BJ (cell line): ENCODE measurements at regions of chr21 and their contacts with region 1.

Region 1: GRCh38 chr21:44338971-44339910 is at the start of gene CFAP410:
- DNase-seq: peak; percentile 67
- H3K4me3 ChIP-seq: peak within 1 kb of the TSS; percentile 100
- H3K27me3 ChIP-seq: no peaks in the 10 kb centered on the region
- CTCF ChIP-seq: no peak
- polyA plus RNA-seq, gene CFAP410: 8.4 and 13.5 TPM in 2 replicates

Region 2: DNA sequence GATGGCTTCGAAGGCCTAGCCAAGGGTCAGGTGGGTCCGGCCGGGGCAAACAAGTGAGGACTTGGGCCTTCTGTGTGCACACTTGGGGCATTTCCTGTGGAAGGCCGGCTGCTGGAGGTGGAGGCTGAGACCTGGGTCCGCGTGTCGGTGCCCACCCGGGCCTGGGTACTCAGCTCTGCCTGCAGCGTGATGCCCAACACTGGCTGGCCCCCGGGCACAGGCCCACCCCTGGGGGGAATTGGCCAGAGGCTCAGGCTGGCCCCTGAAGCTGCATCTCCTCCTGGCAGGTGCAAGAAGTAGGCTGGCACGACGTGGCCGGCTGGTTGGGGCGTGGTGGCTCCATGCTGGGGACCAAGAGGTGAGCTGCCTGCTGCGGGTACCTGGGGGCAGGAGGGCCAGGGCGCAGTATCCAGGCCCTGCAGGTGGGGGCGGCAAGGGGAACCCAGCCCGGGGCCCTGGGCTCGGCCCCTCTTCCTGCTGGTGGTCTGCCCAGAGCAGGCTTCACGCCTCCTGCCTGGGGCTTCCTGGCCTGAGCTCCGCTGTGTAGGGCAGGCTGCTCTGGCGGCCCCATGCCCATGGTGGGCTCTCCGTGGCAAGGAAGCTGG is 17.3 kb before region 1 on chr21:
- CTCF ChIA-PET with region 1: no interaction called
- POLR2A ChIA-PET with region 1: no interaction called
- DNase-seq: no peak
- H3K4me3 ChIP-seq: no peak overlapping the region
- H3K27me3 ChIP-seq: no peaks in the 10 kb centered on the region
- CTCF ChIP-seq: no peak

Region 3: GRCh38 chr21:44353191-44353970 is 14.1 kb after region 1 on chr21 and contains the start of gene TRPM2:
- CTCF ChIA-PET with region 1: no interaction called
- POLR2A ChIA-PET with region 1: no interaction called
- DNase-seq: no peak
- H3K4me3 ChIP-seq: no peak within 1 kb of the TSS
- H3K27me3 ChIP-seq: peaks cover 15% of the 10 kb centered on the region
- CTCF ChIP-seq: no peak
- polyA plus RNA-seq, gene TRPM2: not detected in 2 replicates

Region 4: DNA sequence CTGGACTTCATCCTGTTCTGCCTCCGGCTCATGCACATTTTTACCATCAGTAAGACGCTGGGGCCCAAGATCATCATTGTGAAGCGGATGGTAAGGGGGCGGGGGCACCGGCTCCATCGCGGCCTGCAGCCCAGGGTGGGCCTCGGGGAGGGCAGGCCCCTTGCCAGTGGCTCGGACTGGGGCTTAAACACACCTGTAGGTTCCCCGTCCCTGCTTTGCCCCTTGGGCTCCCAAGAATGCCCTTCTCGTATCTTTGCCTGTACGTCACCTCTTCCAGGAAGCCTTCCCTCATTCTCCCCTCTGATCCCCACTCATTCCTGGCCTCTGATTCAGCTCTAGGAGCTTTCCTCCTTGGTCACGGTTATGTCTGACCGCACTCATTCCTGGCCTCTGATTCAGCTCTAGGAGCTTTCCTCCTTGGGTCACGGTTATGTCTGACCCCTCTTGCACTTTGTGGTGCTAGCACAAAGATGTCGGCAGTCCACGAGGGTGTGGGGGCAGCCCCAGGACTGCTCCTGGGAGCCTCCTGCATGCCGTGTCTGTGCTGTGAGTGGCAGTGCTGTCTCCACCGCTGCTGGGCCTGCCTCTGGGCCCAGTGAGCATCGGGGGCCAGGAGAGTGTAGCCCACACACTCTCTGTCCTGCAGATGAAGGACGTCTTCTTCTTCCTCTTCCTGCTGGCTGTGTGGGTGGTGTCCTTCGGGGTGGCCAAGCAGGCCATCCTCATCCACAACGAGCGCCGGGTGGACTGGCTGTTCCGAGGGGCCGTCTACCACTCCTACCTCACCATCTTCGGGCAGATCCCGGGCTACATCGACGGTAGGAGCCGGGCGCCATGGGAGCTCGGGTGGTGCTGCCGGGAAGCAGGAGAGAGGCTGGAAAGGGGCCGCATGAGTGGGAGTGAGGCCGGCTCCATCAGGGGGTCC is 67.0 kb after region 1 on chr21:
- CTCF ChIA-PET with region 1: no interaction called
- POLR2A ChIA-PET with region 1: interaction called, 10 read pairs
- DNase-seq: peak; percentile 4
- H3K4me3 ChIP-seq: no peak overlapping the region
- H3K27me3 ChIP-seq: no peaks in the 10 kb centered on the region
- CTCF ChIP-seq: no peak

Region 5: GRCh38 chr21:44845399-44846223 is 506.4 kb after region 1 on chr21:
- CTCF ChIA-PET with region 1: no interaction called
- POLR2A ChIA-PET with region 1: no interaction called
- DNase-seq: no peak
- H3K4me3 ChIP-seq: peak overlapping the region; percentile 33
- H3K27me3 ChIP-seq: peaks cover 7% of the 10 kb centered on the region
- CTCF ChIP-seq: peak; percentile 62